Mammary epithelial cell (primary cell): ENCODE measurements at regions of chr17 and their contacts with region 1.

Region 1: DNA sequence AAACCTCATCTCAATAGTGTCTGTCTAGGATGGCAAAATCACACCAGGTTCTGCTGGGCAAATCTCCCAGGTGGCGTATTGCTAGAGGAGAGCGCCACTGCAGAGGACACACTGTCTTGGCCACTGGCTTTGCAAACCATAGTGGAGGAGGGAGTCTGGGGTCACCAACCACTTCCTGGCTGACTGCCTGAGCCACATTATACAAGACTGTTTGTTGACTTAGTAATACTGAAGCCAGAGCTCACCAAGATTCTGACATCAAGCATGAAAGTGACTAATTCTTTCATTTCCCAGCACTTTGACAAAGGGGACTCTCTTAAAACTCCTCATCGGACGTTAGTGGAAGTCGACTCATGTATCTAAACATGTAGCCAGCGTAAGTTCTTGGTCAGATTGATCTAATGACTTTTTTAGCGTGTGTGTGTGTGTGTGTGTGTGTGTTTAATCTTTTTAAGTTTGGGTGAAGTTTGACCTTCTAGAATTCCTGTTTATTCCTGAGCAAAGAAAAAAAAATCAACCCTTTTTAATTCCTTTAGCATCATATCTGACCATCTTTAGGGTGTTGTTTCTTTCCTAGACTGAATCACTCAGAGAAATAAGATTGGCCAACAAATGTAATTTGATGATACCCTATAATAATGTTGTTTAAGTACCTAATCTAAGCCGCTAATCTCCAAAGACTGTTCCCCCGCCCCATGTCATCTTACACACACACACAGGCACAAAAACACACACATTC is 13.7 kb downstream of the PITPNC1 start:
- DNase-seq: peak; percentile 96
- H3K4me3 ChIP-seq: peak overlapping the region in 1 of 3 experiments; percentile 26
- H3K27ac ChIP-seq: peak overlapping the region; percentile 84
- H3K4me1 ChIP-seq: peaks cover 16% of the 10 kb centered on the region
- H3K27me3 ChIP-seq: no peaks in the 10 kb centered on the region
- CTCF ChIP-seq: no peak

Region 2: DNA sequence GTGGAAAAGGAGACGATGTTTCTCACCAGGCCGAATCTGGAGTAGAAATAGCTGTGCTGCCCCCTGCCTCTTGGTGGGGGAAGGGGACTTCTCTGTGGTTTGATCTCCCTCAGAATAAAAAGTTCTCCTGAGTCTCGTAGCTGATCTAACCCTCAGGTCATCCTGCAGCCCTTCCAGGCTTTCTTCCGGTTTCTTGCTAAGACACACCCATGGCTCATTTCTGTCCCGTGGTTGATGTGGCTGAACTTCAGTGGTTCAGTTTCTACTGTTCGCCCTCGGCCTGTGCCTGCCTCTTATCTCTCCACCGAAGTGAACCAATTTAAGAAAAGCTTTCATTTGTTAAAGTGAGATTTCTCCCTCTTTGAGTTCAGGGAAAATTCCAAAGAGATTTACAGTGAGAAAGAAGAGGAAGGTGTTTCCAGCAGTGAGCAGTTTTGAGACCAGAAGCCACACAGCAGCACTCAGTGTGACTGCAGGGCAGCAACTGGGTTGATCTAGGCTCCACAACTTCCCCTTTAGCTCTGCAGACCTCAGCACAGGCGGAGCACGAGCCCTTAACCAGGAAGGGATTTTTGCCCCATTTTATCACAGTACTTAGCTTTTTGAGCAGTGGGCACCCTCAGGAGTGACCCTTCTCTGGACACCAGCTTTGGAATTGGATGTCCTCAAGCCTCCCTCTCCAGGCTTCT is 590.8 kb before region 1 on chr17:
- CTCF ChIA-PET with region 1: no interaction called
- dilution Hi-C with region 1: no loop called
- in situ Hi-C with region 1: no loop called
- intact Hi-C with region 1: no loop called
- DNase-seq: no peak
- H3K4me3 ChIP-seq: no peak overlapping the region
- H3K27ac ChIP-seq: no peak overlapping the region
- H3K4me1 ChIP-seq: no peaks in the 10 kb centered on the region
- H3K27me3 ChIP-seq: no peaks in the 10 kb centered on the region
- CTCF ChIP-seq: no peak

Region 3: GRCh38 chr17:67293251-67294203 is 97.3 kb before region 1 on chr17:
- CTCF ChIA-PET with region 1: no interaction called
- dilution Hi-C with region 1: no loop called
- in situ Hi-C with region 1: no loop called
- intact Hi-C with region 1: no loop called
- DNase-seq: no peak
- H3K4me3 ChIP-seq: no peak overlapping the region
- H3K27ac ChIP-seq: no peak overlapping the region
- H3K4me1 ChIP-seq: no peaks in the 10 kb centered on the region
- H3K27me3 ChIP-seq: no peaks in the 10 kb centered on the region
- CTCF ChIP-seq: peak; percentile 74 to 86

Region 4: GRCh38 chr17:67475236-67475937 is 84.6 kb after region 1 on chr17:
- CTCF ChIA-PET with region 1: interaction called, 4 read pairs
- dilution Hi-C with region 1: loop called (anchors 5 kb)
- in situ Hi-C with region 1: loop called in 1 of 2 experiments (anchors 5 kb)
- intact Hi-C with region 1: loop called (anchors 1 kb)
- DNase-seq: peak; percentile 64
- H3K4me3 ChIP-seq: no peak overlapping the region
- H3K27ac ChIP-seq: no peak overlapping the region
- H3K4me1 ChIP-seq: peaks cover 24% of the 10 kb centered on the region
- H3K27me3 ChIP-seq: no peaks in the 10 kb centered on the region
- CTCF ChIP-seq: peak; percentile 99

Region 5: DNA sequence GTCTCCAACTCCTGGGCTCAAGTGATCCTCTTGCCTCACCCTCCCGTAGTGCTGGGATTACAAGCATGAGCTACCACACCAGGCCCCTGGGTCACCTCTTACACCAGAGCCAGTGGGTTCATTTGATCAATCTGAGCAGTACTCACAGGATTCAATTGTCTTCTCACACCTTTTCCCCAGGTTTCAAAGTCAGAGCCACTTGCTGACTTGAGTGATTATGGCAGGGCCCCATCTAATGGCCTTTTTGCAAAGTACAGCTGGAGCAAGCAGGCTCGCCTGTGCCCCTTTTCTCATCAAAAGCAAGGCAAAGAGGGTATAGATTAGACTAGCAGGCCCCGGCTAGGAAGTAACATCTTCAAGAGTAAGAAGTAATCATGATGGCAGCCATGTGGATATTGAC is 212.1 kb after region 1 on chr17:
- CTCF ChIA-PET with region 1: no interaction called
- dilution Hi-C with region 1: no loop called
- in situ Hi-C with region 1: no loop called
- intact Hi-C with region 1: loop called (anchors 1 kb)
- DNase-seq: peak; percentile 20
- H3K4me3 ChIP-seq: no peak overlapping the region
- H3K27ac ChIP-seq: no peak overlapping the region
- H3K4me1 ChIP-seq: no peaks in the 10 kb centered on the region
- H3K27me3 ChIP-seq: no peaks in the 10 kb centered on the region
- CTCF ChIP-seq: peak; percentile 36 to 52

Region 6: GRCh38 chr17:67629971-67630320 is 239.1 kb after region 1 on chr17:
- CTCF ChIA-PET with region 1: no interaction called
- dilution Hi-C with region 1: no loop called
- in situ Hi-C with region 1: no loop called
- intact Hi-C with region 1: loop called (anchors 1 kb)
- DNase-seq: peak; percentile 38
- H3K4me3 ChIP-seq: no peak overlapping the region
- H3K27ac ChIP-seq: no peak overlapping the region
- H3K4me1 ChIP-seq: no peaks in the 10 kb centered on the region
- H3K27me3 ChIP-seq: no peaks in the 10 kb centered on the region
- CTCF ChIP-seq: peak; percentile 29 to 50